CD4-positive, alpha-beta T cell (primary cell): ENCODE measurements at regions of chr19 and their contacts with region 1.

Region 1: GRCh38 chr19:45092747-45093678 is at the start of gene PPP1R37:
- DNase-seq: peak; percentile 83 to 98 (median 90)
- ATAC-seq: peak; percentile 72
- H3K4me3 ChIP-seq: peak within 1 kb of the TSS; percentile 97
- H3K4me3 Mint-ChIP-seq: peak within 1 kb of the TSS; percentile 93
- H3K27ac ChIP-seq: peak within 1 kb of the TSS; percentile 64 to 91
- H3K27ac Mint-ChIP-seq: peak within 1 kb of the TSS; percentile 97
- H3K4me1 ChIP-seq: peaks cover 88% of the 10 kb centered on the region
- H3K4me1 Mint-ChIP-seq: peaks cover 66% of the 10 kb centered on the region
- H3K27me3 ChIP-seq: no peaks in the 10 kb centered on the region
- H3K27me3 Mint-ChIP-seq: no peaks in the 10 kb centered on the region
- CTCF ChIP-seq: peak; percentile 27
- total RNA-seq, gene PPP1R37: 17.2 to 19.6 TPM

Region 2: DNA sequence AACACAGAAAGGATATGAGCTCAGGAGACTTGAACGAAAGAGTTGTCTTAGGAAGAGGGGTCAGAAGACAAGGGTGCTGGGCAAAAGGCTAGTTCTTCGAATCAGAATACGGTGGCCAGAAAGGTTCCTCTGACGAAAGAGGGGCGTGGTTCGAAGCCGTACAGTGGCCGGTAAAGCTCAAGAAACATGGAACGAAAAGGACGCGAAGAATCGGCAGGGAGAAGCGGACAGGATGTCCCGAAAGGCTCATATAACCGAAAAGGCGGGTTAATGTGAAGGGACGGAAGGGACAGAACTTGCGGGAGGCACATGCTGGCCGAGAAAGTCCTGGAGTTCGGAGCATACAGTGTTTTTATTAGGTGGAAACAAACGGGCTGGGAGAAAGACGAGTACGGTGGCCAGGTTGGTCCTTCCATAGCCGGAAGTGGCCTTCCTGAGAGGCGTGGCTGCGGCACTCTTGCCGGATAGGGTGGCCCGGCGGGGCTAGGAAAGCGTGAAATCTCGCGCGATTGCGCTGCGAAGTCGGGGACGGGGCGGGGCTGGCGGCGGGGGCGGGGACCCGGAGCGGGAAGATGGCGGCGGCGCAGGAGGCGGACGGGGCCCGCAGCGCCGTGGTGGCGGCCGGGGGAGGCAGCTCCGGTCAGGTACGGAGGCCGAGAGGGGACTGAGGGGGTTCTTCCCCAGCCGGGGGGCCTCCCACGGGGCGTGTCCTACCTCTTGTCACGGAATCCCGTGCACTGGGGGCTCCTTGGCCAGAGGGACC is 138.0 kb before region 1 on chr19 and contains the start of gene CLPTM1:
- CTCF ChIA-PET with region 1: no interaction called
- POLR2A ChIA-PET with region 1: no interaction called
- intact Hi-C with region 1: loop called in 1 of 2 experiments (anchors 5 kb)
- DNase-seq: peak; percentile 93 to 98 (median 96)
- ATAC-seq: peak; percentile 94
- H3K4me3 ChIP-seq: peak within 1 kb of the TSS; percentile 91
- H3K4me3 Mint-ChIP-seq: peak within 1 kb of the TSS; percentile 96
- H3K27ac ChIP-seq: peak within 1 kb of the TSS; percentile 80 to 93
- H3K27ac Mint-ChIP-seq: peak within 1 kb of the TSS; percentile 88
- H3K4me1 ChIP-seq: peaks cover 52% of the 10 kb centered on the region
- H3K4me1 Mint-ChIP-seq: peaks cover 46% of the 10 kb centered on the region
- H3K27me3 ChIP-seq: no peaks in the 10 kb centered on the region
- H3K27me3 Mint-ChIP-seq: no peaks in the 10 kb centered on the region
- CTCF ChIP-seq: no peak
- total RNA-seq, gene CLPTM1: 71.0 to 72.7 TPM

Region 3: GRCh38 chr19:45038931-45039893 is 53.8 kb before region 1 on chr19 and contains the start of gene CLASRP:
- CTCF ChIA-PET with region 1: interaction called, 3 read pairs
- POLR2A ChIA-PET with region 1: interaction called, 10 read pairs
- intact Hi-C with region 1: loop called in 1 of 2 experiments (anchors 1 kb)
- DNase-seq: peak; percentile 78 to 95 (median 85)
- ATAC-seq: peak; percentile 87
- H3K4me3 ChIP-seq: peak within 1 kb of the TSS; percentile 98
- H3K4me3 Mint-ChIP-seq: peak within 1 kb of the TSS; percentile 99
- H3K27ac ChIP-seq: peak within 1 kb of the TSS; percentile 91 to 99
- H3K27ac Mint-ChIP-seq: peak within 1 kb of the TSS; percentile 96
- H3K4me1 ChIP-seq: peaks cover 46% of the 10 kb centered on the region
- H3K4me1 Mint-ChIP-seq: peaks cover 34% of the 10 kb centered on the region
- H3K27me3 ChIP-seq: no peaks in the 10 kb centered on the region
- H3K27me3 Mint-ChIP-seq: no peaks in the 10 kb centered on the region
- CTCF ChIP-seq: no peak
- total RNA-seq, gene CLASRP: 152 to 154 TPM

Region 4: GRCh38 chr19:45103156-45103507 is 10.1 kb after region 1 on chr19:
- CTCF ChIA-PET with region 1: interaction called, 8 read pairs
- POLR2A ChIA-PET with region 1: interaction called, 71 read pairs
- intact Hi-C with region 1: no loop called
- DNase-seq: peak; percentile 22 to 78 (median 43)
- ATAC-seq: peak; percentile 94
- H3K4me3 ChIP-seq: peak overlapping the region; percentile 52
- H3K4me3 Mint-ChIP-seq: peak overlapping the region; percentile 73
- H3K27ac ChIP-seq: peak overlapping the region; percentile 18 to 48
- H3K27ac Mint-ChIP-seq: peak overlapping the region; percentile 86
- H3K4me1 ChIP-seq: peaks cover 48% of the 10 kb centered on the region
- H3K4me1 Mint-ChIP-seq: peaks cover 61% of the 10 kb centered on the region
- H3K27me3 ChIP-seq: no peaks in the 10 kb centered on the region
- H3K27me3 Mint-ChIP-seq: no peaks in the 10 kb centered on the region
- CTCF ChIP-seq: no peak

Region 5: GRCh38 chr19:45125926-45126493 is 33.0 kb after region 1 on chr19:
- CTCF ChIA-PET with region 1: no interaction called
- POLR2A ChIA-PET with region 1: interaction called, 3 read pairs
- intact Hi-C with region 1: loop called in 1 of 2 experiments (anchors 5 kb)
- DNase-seq: peak; percentile 52 to 79 (median 62)
- ATAC-seq: peak; percentile 92
- H3K4me3 ChIP-seq: no peak overlapping the region
- H3K4me3 Mint-ChIP-seq: no peak overlapping the region
- H3K27ac ChIP-seq: no peak overlapping the region
- H3K27ac Mint-ChIP-seq: no peak overlapping the region
- H3K4me1 ChIP-seq: peaks cover 25% of the 10 kb centered on the region
- H3K4me1 Mint-ChIP-seq: peaks cover 31% of the 10 kb centered on the region
- H3K27me3 ChIP-seq: no peaks in the 10 kb centered on the region
- H3K27me3 Mint-ChIP-seq: no peaks in the 10 kb centered on the region
- CTCF ChIP-seq: peak; percentile 70

Region 6: DNA sequence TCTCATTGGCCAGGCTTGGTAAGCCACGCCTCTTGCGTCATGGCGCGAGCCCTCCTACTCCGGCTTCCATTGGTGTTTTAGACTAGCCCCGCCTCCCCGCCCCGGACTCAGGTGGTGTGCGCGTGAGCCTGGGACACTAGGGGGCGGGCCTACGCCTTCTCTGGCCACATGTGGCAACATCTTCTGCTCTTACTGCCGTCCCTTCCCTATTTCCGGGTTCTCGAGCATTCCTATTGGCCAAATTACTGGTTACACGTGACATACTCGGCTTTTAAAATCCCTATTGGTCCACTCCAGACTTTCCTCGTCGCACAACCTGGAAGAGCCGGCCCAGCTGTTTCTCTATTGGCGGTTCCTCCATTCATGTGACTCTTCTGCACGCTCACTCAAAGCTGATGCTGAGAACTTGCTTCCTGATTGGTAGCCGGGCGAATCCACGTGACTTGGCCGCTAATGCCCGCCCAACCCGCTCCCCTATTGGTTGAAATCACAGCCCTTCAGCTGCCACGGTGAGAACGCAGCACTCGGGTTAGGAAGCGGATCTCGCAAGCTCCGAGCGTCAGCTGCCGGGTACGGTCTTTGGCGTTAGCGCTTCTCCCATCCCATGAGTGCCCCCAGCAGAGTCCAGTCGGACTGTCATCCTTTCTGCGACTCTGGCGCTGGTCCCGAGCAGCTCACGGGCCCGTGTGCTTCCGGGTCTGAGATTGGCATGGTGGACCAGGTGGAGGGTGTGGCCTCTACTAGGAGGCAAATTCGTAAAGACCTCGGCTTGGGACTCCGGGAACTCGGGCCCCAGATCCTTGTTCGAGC is 85.5 kb after region 1 on chr19 and contains the start of gene BLOC1S3:
- CTCF ChIA-PET with region 1: interaction called, 7 read pairs
- POLR2A ChIA-PET with region 1: interaction called, 81 read pairs
- intact Hi-C with region 1: loop called (anchors 1 to 5 kb)
- DNase-seq: peak; percentile 99 to 100 (median 100)
- ATAC-seq: peak; percentile 85
- H3K4me3 ChIP-seq: peak within 1 kb of the TSS; percentile 93
- H3K4me3 Mint-ChIP-seq: peak within 1 kb of the TSS; percentile 87
- H3K27ac ChIP-seq: peak within 1 kb of the TSS; percentile 86 to 91
- H3K27ac Mint-ChIP-seq: peak within 1 kb of the TSS; percentile 84
- H3K4me1 ChIP-seq: peaks cover 57% of the 10 kb centered on the region
- H3K4me1 Mint-ChIP-seq: peaks cover 42% of the 10 kb centered on the region
- H3K27me3 ChIP-seq: no peaks in the 10 kb centered on the region
- H3K27me3 Mint-ChIP-seq: no peaks in the 10 kb centered on the region
- CTCF ChIP-seq: peak; percentile 32
- total RNA-seq, gene BLOC1S3: 14.7 to 18.8 TPM

Region 7: GRCh38 chr19:45584332-45585157 is 491.5 kb after region 1 on chr19 and contains the start of gene OPA3:
- CTCF ChIA-PET with region 1: no interaction called
- POLR2A ChIA-PET with region 1: no interaction called
- intact Hi-C with region 1: loop called in 1 of 2 experiments (anchors 5 kb)
- DNase-seq: peak; percentile 97 to 100 (median 99)
- ATAC-seq: peak; percentile 85
- H3K4me3 ChIP-seq: peak within 1 kb of the TSS; percentile 95
- H3K4me3 Mint-ChIP-seq: peak within 1 kb of the TSS; percentile 88
- H3K27ac ChIP-seq: peak within 1 kb of the TSS; percentile 98 to 99
- H3K27ac Mint-ChIP-seq: peak within 1 kb of the TSS; percentile 98
- H3K4me1 ChIP-seq: peaks cover 21% of the 10 kb centered on the region
- H3K4me1 Mint-ChIP-seq: peaks cover 26% of the 10 kb centered on the region
- H3K27me3 ChIP-seq: peaks cover 0 to under 1% of the 10 kb centered on the region in 2 experiments
- H3K27me3 Mint-ChIP-seq: peaks cover 12% of the 10 kb centered on the region
- CTCF ChIP-seq: no peak
- total RNA-seq, gene OPA3: 3.1 to 3.2 TPM